ENCODE measurements at regions of chr6 and their contacts with region 1.

Region 1: GRCh38 chr6:110567957-110568696 is 91.7 kb upstream of the SLC22A16 start:
- DNase-seq: no peak
- ATAC-seq: no peak
- H3K4me3 ChIP-seq: no peak overlapping the region
- H3K27ac ChIP-seq: peak overlapping the region; percentile 94
- H3K4me1 ChIP-seq: peaks cover 88% of the 10 kb centered on the region
- H3K27me3 ChIP-seq: no peaks in the 10 kb centered on the region
- CTCF ChIP-seq: no peak
- EP300 ChIP-seq: no peak
- POLR2A ChIP-seq: no peak
- RAD21 ChIP-seq: no peak

Region 2: GRCh38 chr6:110554966-110555460 is 13.1 kb before region 1 on chr6:
- CTCF ChIA-PET with region 1: no interaction called
- POLR2A ChIA-PET with region 1: interaction called, 40 read pairs
- in situ Hi-C with region 1: no loop called
- intact Hi-C with region 1: loop called (anchors 1 kb)
- DNase-seq: peak; percentile 99
- ATAC-seq: peak; percentile 98
- H3K4me3 ChIP-seq: peak overlapping the region in 1 of 3 experiments; percentile 13; a peak in 1 of 6 replicates
- H3K27ac ChIP-seq: peak overlapping the region; percentile 94
- H3K4me1 ChIP-seq: peaks cover 86% of the 10 kb centered on the region
- H3K27me3 ChIP-seq: no peaks in the 10 kb centered on the region
- CTCF ChIP-seq: no peak; the same call in 1 of the 2 replicates
- EP300 ChIP-seq: peak; percentile 82 to 97
- POLR2A ChIP-seq: peak in 1 of 2 experiments; percentile 36; a peak in 1 of 4 replicates
- RAD21 ChIP-seq: peak; percentile 35; the same call in 1 of the 2 replicates

Region 3: GRCh38 chr6:110656492-110656891 is 88.4 kb after region 1 on chr6:
- CTCF ChIA-PET with region 1: no interaction called
- POLR2A ChIA-PET with region 1: no interaction called
- in situ Hi-C with region 1: no loop called
- intact Hi-C with region 1: loop called (anchors 10 kb)
- DNase-seq: peak; percentile 60
- ATAC-seq: peak; percentile 42; the same call in 2 of the 3 replicates
- H3K4me3 ChIP-seq: no peak overlapping the region
- H3K27ac ChIP-seq: peak overlapping the region; percentile 14
- H3K4me1 ChIP-seq: peaks cover 61% of the 10 kb centered on the region
- H3K27me3 ChIP-seq: no peaks in the 10 kb centered on the region
- CTCF ChIP-seq: no peak
- EP300 ChIP-seq: no peak
- POLR2A ChIP-seq: no peak
- RAD21 ChIP-seq: no peak

Region 4: DNA sequence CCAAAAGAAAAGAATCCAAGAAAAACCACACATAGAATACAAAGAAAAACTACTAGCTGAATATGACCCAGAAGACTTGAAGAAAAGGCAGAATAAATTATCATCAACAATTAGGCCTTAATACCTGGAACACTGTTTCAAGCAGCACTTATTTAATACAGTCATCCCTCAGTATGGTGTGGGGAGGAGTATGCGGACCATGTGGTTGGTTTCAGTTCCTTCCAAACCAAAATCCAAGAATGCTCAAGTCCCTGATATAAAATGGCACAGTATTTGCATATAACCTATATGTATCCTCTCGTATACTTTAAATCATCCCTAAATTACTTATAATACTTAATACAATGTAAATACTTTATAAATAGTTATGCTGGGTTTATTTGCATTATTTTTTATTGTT is 231.1 kb after region 1 on chr6:
- CTCF ChIA-PET with region 1: no interaction called
- POLR2A ChIA-PET with region 1: no interaction called
- in situ Hi-C with region 1: no loop called
- intact Hi-C with region 1: no loop called
- DNase-seq: no peak
- ATAC-seq: no peak
- H3K4me3 ChIP-seq: no peak overlapping the region
- H3K27ac ChIP-seq: no peak overlapping the region
- H3K4me1 ChIP-seq: peaks cover 21% of the 10 kb centered on the region
- H3K27me3 ChIP-seq: no peaks in the 10 kb centered on the region
- CTCF ChIP-seq: no peak
- EP300 ChIP-seq: no peak
- POLR2A ChIP-seq: no peak
- RAD21 ChIP-seq: no peak

Measured in HepG2 (cell line).